ENCODE measurements at regions of chr18 and their contacts with region 1.

Region 1: GRCh38 chr18:68817584-68817983 is 19.7 kb downstream of the CCDC102B start:
- DNase-seq: no peak
- H3K4me3 ChIP-seq: no peak overlapping the region
- H3K27ac ChIP-seq: no peak overlapping the region
- H3K4me1 ChIP-seq: no peaks in the 10 kb centered on the region
- H3K27me3 ChIP-seq: no peaks in the 10 kb centered on the region
- CTCF ChIP-seq: no peak

Region 2: DNA sequence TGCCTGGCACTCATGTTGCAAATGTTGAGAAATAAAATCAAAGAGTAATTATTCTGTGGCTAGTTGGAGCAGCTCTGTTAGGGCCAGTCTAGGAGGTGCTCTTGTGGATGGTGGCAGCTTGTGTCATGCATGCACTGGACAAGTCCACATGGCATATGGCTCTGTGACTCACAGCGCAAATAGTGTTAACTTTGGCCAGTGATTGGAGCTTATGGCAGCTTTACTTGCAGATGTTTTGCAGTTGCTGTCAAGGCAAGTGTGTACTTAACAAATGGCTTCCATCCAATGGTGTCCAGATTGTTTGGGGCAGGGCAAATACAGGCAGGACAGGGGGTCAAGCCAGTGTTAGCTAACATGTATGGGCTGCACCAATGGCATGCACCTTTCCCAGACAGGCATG is 76.6 kb before region 1 on chr18:
- intact Hi-C with region 1: loop called (anchors 2 kb)
- DNase-seq: no peak
- H3K4me3 ChIP-seq: no peak overlapping the region
- H3K27ac ChIP-seq: no peak overlapping the region
- H3K4me1 ChIP-seq: no peaks in the 10 kb centered on the region
- H3K27me3 ChIP-seq: no peaks in the 10 kb centered on the region
- CTCF ChIP-seq: no peak

Measured in tibial artery (tissue), 4 donors.